HepG2 (cell line): ENCODE measurements at regions of chr16 and their contacts with region 1.

Region 1: GRCh38 chr16:68310761-68311511 is at the starts of genes PRMT7 and SLC7A6OS:
- DNase-seq: peak; percentile 90
- ATAC-seq: peak; percentile 99
- H3K4me3 ChIP-seq: peak within 1 kb of the TSS; percentile 77 to 91 (median 90)
- H3K27ac ChIP-seq: peak within 1 kb of the TSS; percentile 85
- H3K4me1 ChIP-seq: peaks cover 44% of the 10 kb centered on the region
- H3K27me3 ChIP-seq: no peaks in the 10 kb centered on the region; a peak in 1 of 5 replicates
- CTCF ChIP-seq: 0 out of 2 replicates have a peak, but pooled peaks have one; percentile 23
- EP300 ChIP-seq: peak in 1 of 2 experiments; percentile 16; a peak in 1 of 4 replicates
- POLR2A ChIP-seq: peak; percentile 97
- RAD21 ChIP-seq: peak; percentile 66
- total RNA-seq, gene PRMT7: 46.7 and 55.0 TPM in 2 replicates
- total RNA-seq, gene SLC7A6OS: 21.5 and 21.6 TPM in 2 replicates

Region 2: DNA sequence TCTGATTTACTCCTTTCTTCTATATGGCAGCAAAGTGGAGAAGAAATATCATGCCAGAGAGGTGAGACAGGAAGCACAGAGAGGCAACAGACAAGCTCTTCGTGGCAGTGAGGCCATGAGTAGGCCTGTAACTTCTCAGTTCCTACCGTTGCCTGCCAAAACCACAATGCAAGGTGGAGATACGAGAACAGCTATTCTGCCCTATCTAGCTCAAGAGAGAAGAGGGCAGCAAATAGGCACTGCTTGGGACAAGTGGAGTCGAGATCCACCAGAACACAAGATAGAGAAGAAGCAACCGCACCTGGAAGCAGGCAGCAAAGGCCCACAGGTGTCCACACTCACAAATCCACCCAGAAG is 529.4 kb before region 1 on chr16:
- CTCF ChIA-PET with region 1: no interaction called
- POLR2A ChIA-PET with region 1: no interaction called
- in situ Hi-C with region 1: no loop called
- intact Hi-C with region 1: no loop called
- DNase-seq: no peak
- ATAC-seq: no peak
- H3K4me3 ChIP-seq: no peak overlapping the region
- H3K27ac ChIP-seq: no peak overlapping the region
- H3K4me1 ChIP-seq: peaks cover 21% of the 10 kb centered on the region
- H3K27me3 ChIP-seq: no peaks in the 10 kb centered on the region
- CTCF ChIP-seq: no peak
- EP300 ChIP-seq: no peak
- POLR2A ChIP-seq: no peak
- RAD21 ChIP-seq: no peak

Region 3: DNA sequence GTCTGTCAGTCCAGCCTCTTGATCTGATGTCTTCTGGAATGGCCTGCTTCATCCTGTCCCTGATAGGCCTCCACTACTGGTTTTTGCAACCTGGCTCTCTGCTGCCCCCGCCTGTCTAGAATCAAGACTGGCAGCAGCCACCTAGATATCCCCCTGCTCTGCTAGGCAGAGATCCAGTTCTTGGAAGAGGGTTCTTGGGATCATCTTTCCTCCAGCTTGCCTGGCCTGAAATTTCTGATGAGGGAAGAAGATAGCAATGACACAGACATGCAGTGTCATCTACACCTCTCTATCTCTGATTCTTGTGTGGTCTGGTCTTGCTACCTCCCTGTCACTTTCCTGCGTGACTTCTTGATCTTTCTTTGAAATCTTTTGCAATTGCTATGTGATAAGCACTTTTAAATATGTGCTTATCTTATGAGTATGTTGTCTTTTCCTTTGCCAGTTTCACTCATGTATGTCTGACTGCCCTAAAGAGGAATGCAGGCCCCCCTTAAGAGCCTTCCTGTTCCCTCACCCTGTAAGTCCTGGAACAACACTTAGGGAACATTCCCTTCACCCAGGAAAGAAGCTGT is 246.1 kb before region 1 on chr16:
- CTCF ChIA-PET with region 1: no interaction called
- POLR2A ChIA-PET with region 1: no interaction called
- in situ Hi-C with region 1: no loop called
- intact Hi-C with region 1: no loop called
- DNase-seq: peak; percentile 61
- ATAC-seq: peak; percentile 97
- H3K4me3 ChIP-seq: no peak overlapping the region
- H3K27ac ChIP-seq: no peak overlapping the region
- H3K4me1 ChIP-seq: no peaks in the 10 kb centered on the region
- H3K27me3 ChIP-seq: no peaks in the 10 kb centered on the region
- CTCF ChIP-seq: peak; percentile 94
- EP300 ChIP-seq: no peak
- POLR2A ChIP-seq: no peak
- RAD21 ChIP-seq: peak; percentile 86

Region 4: DNA sequence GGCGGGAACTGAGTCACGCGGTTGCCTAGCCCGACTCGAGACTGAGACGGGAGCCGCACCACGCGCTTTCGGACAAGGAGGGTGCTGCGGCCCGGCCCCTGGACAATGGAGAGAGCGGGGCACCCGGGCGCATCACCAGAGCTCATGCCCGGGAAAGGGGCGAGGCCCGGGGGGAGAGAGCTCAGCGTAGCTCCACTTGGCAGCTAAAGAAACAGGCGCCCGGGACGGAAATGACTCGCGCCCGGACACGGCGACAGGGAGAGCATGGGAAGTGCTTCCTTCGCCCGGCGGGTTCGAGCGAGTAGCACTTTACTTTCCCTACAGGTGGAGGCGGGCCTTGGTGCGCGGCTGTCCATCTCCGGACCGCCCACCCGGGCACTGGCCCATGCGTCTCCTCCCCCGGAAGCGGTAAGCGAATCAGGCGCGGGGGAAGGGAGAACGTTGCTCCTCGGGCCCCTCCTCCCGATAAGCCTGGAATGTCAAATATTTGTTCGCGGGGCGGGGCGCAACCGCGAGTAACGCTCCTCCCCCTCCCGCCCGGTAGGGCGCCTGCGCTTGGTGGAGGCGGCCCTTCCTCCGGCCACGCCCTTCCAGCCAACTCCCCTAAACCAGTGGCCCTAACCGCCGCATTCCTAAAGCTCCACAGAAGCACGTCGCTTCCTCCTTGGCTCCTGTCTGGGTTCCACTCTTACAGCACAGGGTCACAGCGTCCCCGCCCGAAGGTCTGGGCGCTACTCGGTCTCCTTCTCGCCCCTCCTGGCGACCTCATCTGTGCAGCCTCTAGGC is 73.5 kb before region 1 on chr16:
- CTCF ChIA-PET with region 1: no interaction called
- POLR2A ChIA-PET with region 1: interaction called, 33 read pairs
- in situ Hi-C with region 1: no loop called
- intact Hi-C with region 1: no loop called
- DNase-seq: peak; percentile 98
- ATAC-seq: peak; percentile 71
- H3K4me3 ChIP-seq: peak overlapping the region; percentile 66 to 94 (median 93)
- H3K27ac ChIP-seq: peak overlapping the region; percentile 85
- H3K4me1 ChIP-seq: peaks cover 38% of the 10 kb centered on the region
- H3K27me3 ChIP-seq: no peaks in the 10 kb centered on the region; a peak in 1 of 5 replicates
- CTCF ChIP-seq: peak; percentile 10; the same call in 1 of the 2 replicates
- EP300 ChIP-seq: peak; percentile 77 to 92
- POLR2A ChIP-seq: peak in 1 of 2 experiments; percentile 91; a peak in 2 of 4 replicates
- RAD21 ChIP-seq: peak; percentile 28; the same call in 1 of the 2 replicates

Region 5: GRCh38 chr16:68257906-68258800 is 52.8 kb before region 1 on chr16:
- CTCF ChIA-PET with region 1: interaction called, 4 read pairs
- POLR2A ChIA-PET with region 1: interaction called, 35 read pairs
- in situ Hi-C with region 1: no loop called
- intact Hi-C with region 1: no loop called
- DNase-seq: peak; percentile 95
- ATAC-seq: peak; percentile 89
- H3K4me3 ChIP-seq: peak overlapping the region in 1 of 3 experiments; percentile 47; a peak in 2 of 6 replicates
- H3K27ac ChIP-seq: peak overlapping the region; percentile 87
- H3K4me1 ChIP-seq: peaks cover 45% of the 10 kb centered on the region
- H3K27me3 ChIP-seq: no peaks in the 10 kb centered on the region
- CTCF ChIP-seq: peak; percentile 34; the same call in 1 of the 2 replicates
- EP300 ChIP-seq: peak; percentile 42 to 68; a peak in 3 of 4 replicates
- POLR2A ChIP-seq: peak; percentile 19 to 24; a peak in 1 of 4 replicates
- RAD21 ChIP-seq: no peak

Region 6: GRCh38 chr16:68275611-68276191 is 35.2 kb before region 1 on chr16:
- CTCF ChIA-PET with region 1: no interaction called
- POLR2A ChIA-PET with region 1: interaction called, 38 read pairs
- in situ Hi-C with region 1: no loop called
- intact Hi-C with region 1: no loop called
- DNase-seq: peak; percentile 35
- ATAC-seq: peak; percentile 24; the same call in 1 of the 3 replicates
- H3K4me3 ChIP-seq: no peak overlapping the region
- H3K27ac ChIP-seq: peak overlapping the region; percentile 52
- H3K4me1 ChIP-seq: peaks cover 67% of the 10 kb centered on the region
- H3K27me3 ChIP-seq: no peaks in the 10 kb centered on the region
- CTCF ChIP-seq: no peak
- EP300 ChIP-seq: no peak
- POLR2A ChIP-seq: no peak
- RAD21 ChIP-seq: no peak

Region 7: GRCh38 chr16:68289621-68290329 is 21.2 kb before region 1 on chr16:
- CTCF ChIA-PET with region 1: no interaction called
- POLR2A ChIA-PET with region 1: interaction called, 22 read pairs
- in situ Hi-C with region 1: no loop called
- intact Hi-C with region 1: no loop called
- DNase-seq: no peak
- ATAC-seq: no peak
- H3K4me3 ChIP-seq: no peak overlapping the region
- H3K27ac ChIP-seq: no peak overlapping the region
- H3K4me1 ChIP-seq: peaks cover 19% of the 10 kb centered on the region
- H3K27me3 ChIP-seq: no peaks in the 10 kb centered on the region
- CTCF ChIP-seq: no peak
- EP300 ChIP-seq: no peak
- POLR2A ChIP-seq: no peak
- RAD21 ChIP-seq: no peak

Region 8: GRCh38 chr16:68328151-68328859 is 17.4 kb after region 1 on chr16:
- CTCF ChIA-PET with region 1: no interaction called
- POLR2A ChIA-PET with region 1: interaction called, 21 read pairs
- in situ Hi-C with region 1: no loop called
- intact Hi-C with region 1: loop called (anchors 1 kb)
- DNase-seq: peak; percentile 88
- ATAC-seq: peak; percentile 86
- H3K4me3 ChIP-seq: no peak overlapping the region; a peak in 1 of 6 replicates
- H3K27ac ChIP-seq: peak overlapping the region; percentile 50
- H3K4me1 ChIP-seq: peaks cover 54% of the 10 kb centered on the region
- H3K27me3 ChIP-seq: no peaks in the 10 kb centered on the region
- CTCF ChIP-seq: peak; percentile 96
- EP300 ChIP-seq: peak in 1 of 2 experiments; percentile 82; a peak in 2 of 4 replicates
- POLR2A ChIP-seq: no peak
- RAD21 ChIP-seq: peak; percentile 96

Region 9: GRCh38 chr16:68538880-68539701 is 228.2 kb after region 1 on chr16 and contains the start of gene ZFP90:
- CTCF ChIA-PET with region 1: no interaction called
- POLR2A ChIA-PET with region 1: no interaction called
- in situ Hi-C with region 1: no loop called
- intact Hi-C with region 1: no loop called
- DNase-seq: peak; percentile 77
- ATAC-seq: peak; percentile 98
- H3K4me3 ChIP-seq: peak within 1 kb of the TSS; percentile 81 to 91 (median 85)
- H3K27ac ChIP-seq: no peak within 1 kb of the TSS
- H3K4me1 ChIP-seq: peaks cover 21% of the 10 kb centered on the region
- H3K27me3 ChIP-seq: no peaks in the 10 kb centered on the region
- CTCF ChIP-seq: no peak
- EP300 ChIP-seq: no peak
- POLR2A ChIP-seq: peak; percentile 28 to 86; a peak in 2 of 4 replicates
- RAD21 ChIP-seq: peak; percentile 10; the same call in 1 of the 2 replicates
- total RNA-seq, gene ZFP90: 17.6 and 21.9 TPM in 2 replicates